Calu3 (cell line): ENCODE measurements at regions of chr3 and their contacts with region 1.

Region 1: DNA sequence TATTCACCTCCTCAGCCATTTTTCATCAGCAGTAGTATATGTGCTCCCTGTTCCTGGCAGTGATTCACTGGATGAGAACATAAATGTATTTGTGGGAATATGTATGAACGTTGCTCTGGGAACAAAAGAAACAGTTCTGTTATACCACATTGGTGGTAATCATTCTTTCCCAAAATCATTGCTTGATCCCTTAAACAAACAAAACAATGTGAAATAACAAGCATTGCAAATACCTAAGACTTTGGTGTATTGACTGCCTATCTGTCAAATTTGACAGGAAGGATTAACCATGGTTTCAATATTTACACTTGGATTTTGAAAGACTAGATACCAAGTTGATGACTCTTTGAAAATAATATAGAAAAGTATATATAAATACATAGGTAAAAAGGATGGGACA is 284.1 kb downstream of the FHIT start:
- DNase-seq: no peak
- H3K4me3 Mint-ChIP-seq: no peak overlapping the region
- H3K27ac Mint-ChIP-seq: no peak overlapping the region
- H3K4me1 Mint-ChIP-seq: no peaks in the 10 kb centered on the region
- H3K27me3 Mint-ChIP-seq: no peaks in the 10 kb centered on the region
- CTCF ChIP-seq: no peak

Region 2: GRCh38 chr3:60932643-60933042 is 34.5 kb before region 1 on chr3:
- CTCF ChIA-PET with region 1: no interaction called
- intact Hi-C with region 1: no loop called
- DNase-seq: no peak
- H3K4me3 Mint-ChIP-seq: no peak overlapping the region
- H3K27ac Mint-ChIP-seq: no peak overlapping the region
- H3K4me1 Mint-ChIP-seq: no peaks in the 10 kb centered on the region
- H3K27me3 Mint-ChIP-seq: no peaks in the 10 kb centered on the region
- CTCF ChIP-seq: no peak

Region 3: DNA sequence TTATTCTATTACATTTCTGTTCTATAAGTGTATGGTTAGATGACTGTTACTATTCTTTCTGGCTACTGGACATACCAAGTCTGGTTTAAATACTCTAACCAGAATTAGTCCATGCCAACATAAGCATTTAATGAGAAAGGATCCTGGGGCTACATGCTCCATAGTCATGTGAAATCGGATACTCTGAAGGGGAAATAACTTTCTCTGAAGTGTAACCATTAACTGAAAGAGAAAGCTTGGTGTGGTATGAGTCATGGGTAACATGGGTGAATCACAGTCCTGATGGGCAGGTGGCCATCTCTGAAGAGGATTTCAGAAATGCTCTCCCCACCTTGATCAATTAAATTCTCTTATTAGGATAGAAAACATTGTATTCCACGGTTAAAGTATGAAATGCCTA is 214.7 kb after region 1 on chr3:
- CTCF ChIA-PET with region 1: no interaction called
- intact Hi-C with region 1: no loop called
- DNase-seq: peak; percentile 3
- H3K4me3 Mint-ChIP-seq: no peak overlapping the region
- H3K27ac Mint-ChIP-seq: no peak overlapping the region
- H3K4me1 Mint-ChIP-seq: peaks cover 8% of the 10 kb centered on the region
- H3K27me3 Mint-ChIP-seq: no peaks in the 10 kb centered on the region
- CTCF ChIP-seq: no peak

Region 4: DNA sequence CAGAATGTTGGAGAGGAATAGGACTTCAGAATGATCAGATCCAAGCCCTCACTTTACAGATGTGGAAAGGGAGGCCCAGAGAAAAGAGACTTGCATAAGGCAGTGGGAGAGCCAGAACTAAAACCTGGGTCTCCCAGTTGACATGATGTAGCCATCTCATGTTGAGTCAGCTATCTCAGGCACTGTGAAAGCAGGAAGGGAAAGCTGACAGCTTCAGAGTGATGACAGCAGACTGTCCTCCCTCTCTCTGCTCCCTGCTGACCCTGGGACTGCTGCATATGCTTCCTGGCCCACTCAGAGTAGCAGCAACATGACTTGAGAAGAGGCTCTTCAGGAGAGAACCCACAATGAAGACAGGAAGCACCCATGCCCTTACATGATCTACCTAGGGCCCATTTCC is 269.4 kb after region 1 on chr3:
- CTCF ChIA-PET with region 1: no interaction called
- intact Hi-C with region 1: loop called (anchors 5 kb)
- DNase-seq: no peak
- H3K4me3 Mint-ChIP-seq: no peak overlapping the region
- H3K27ac Mint-ChIP-seq: no peak overlapping the region
- H3K4me1 Mint-ChIP-seq: peaks cover 7% of the 10 kb centered on the region
- H3K27me3 Mint-ChIP-seq: no peaks in the 10 kb centered on the region
- CTCF ChIP-seq: no peak